ENCODE measurements at regions of chr5 and their contacts with region 1.

Region 1: DNA sequence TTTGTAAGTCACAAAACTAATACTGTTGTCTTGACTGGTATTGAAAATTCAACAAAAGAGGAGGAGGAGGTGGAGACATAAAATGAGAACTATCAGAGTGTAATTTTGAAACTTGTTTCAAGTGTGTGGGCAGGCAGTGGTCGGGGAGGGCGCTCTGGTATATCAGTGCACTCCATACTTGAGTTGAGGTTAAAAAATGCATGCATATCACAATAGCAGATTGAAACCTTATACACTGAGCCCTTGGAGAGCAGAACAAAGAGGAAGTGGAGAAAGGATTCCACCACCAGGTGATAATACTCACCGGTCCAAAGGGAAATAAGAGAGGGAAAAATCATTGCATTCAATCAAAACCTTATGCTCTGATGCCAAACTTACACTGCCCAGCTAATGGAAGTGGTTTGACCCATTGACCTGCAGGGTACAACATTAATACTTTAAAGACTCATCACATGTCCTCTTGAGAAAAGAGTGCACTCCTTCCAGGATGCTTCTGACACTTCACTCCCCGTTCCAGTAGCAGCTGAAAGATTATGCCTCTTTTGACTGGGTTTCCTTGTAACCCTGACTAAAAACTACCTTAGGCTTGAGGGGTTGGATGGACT is 79.5 kb upstream of the FAM169A start:
- DNase-seq: no peak
- H3K4me3 ChIP-seq: no peak overlapping the region
- H3K27ac ChIP-seq: no peak overlapping the region
- H3K4me1 ChIP-seq: peaks cover 0 to 3% of the 10 kb centered on the region in 2 donors
- H3K27me3 ChIP-seq: no peaks in the 10 kb centered on the region
- CTCF ChIP-seq: no peak

Region 2: GRCh38 chr5:74667396-74667795 is 278.3 kb before region 1 on chr5:
- intact Hi-C with region 1: no loop called
- DNase-seq: no peak
- H3K4me3 ChIP-seq: no peak overlapping the region
- H3K27ac ChIP-seq: no peak overlapping the region
- H3K4me1 ChIP-seq: peaks cover 0 to 2% of the 10 kb centered on the region in 2 donors
- H3K27me3 ChIP-seq: no peaks in the 10 kb centered on the region
- CTCF ChIP-seq: no peak

Region 3: GRCh38 chr5:74684900-74685851 is 260.5 kb before region 1 on chr5 and contains the start of gene HEXB:
- intact Hi-C with region 1: loop called (anchors 5 kb)
- DNase-seq: peak; percentile 58 to 95
- H3K4me3 ChIP-seq: peak within 1 kb of the TSS; percentile 76 to 92
- H3K27ac ChIP-seq: peak within 1 kb of the TSS; percentile 90 to 91
- H3K4me1 ChIP-seq: peaks cover 0 to 11% of the 10 kb centered on the region in 2 donors
- H3K27me3 ChIP-seq: no peaks in the 10 kb centered on the region
- CTCF ChIP-seq: no peak
- total RNA-seq, gene HEXB: 124 TPM